OCI-LY7 (cell line): ENCODE measurements at regions of chr21 and their contacts with region 1.

Region 1: DNA sequence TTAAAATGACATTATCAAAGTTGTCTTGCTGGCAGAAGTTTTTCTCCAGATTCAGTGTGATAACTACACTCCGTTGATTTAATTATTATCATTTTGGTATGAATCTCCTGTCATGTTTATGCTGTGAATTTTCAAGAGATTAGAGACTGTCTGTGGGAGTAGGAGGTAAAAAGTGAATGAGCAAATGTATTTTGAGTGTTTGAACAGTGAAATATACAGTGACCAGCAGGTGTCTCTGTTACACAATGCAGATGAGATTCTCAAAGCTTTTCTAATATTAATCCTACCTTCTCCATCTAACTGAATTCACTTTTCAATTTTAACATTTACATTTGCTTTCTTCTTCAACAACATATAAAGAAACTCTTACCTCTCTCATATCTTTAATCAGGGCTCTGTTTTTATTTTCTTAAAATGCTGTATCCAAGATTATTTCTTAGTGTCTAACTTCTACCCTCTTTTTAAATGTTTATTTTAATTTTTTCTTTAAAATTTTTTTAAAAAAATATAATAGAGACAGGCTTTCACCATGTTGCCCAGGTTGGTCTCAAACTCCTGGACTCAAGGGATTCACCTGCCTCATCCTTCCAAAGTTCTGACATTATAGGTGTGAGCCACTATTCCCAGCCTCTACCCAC is 20.9 kb upstream of the HSPA13 start:
- DNase-seq: peak; percentile 45
- H3K4me3 ChIP-seq: no peak overlapping the region
- H3K27ac ChIP-seq: no peak overlapping the region
- H3K4me1 ChIP-seq: no peaks in the 10 kb centered on the region
- CTCF ChIP-seq: peak; percentile 87

Region 2: GRCh38 chr21:14438211-14438610 is 34.4 kb after region 1 on chr21:
- CTCF ChIA-PET with region 1: no interaction called
- POLR2A ChIA-PET with region 1: no interaction called
- intact Hi-C with region 1: no loop called
- DNase-seq: no peak
- H3K4me3 ChIP-seq: no peak overlapping the region
- H3K27ac ChIP-seq: no peak overlapping the region
- H3K4me1 ChIP-seq: no peaks in the 10 kb centered on the region
- CTCF ChIP-seq: no peak

Region 3: DNA sequence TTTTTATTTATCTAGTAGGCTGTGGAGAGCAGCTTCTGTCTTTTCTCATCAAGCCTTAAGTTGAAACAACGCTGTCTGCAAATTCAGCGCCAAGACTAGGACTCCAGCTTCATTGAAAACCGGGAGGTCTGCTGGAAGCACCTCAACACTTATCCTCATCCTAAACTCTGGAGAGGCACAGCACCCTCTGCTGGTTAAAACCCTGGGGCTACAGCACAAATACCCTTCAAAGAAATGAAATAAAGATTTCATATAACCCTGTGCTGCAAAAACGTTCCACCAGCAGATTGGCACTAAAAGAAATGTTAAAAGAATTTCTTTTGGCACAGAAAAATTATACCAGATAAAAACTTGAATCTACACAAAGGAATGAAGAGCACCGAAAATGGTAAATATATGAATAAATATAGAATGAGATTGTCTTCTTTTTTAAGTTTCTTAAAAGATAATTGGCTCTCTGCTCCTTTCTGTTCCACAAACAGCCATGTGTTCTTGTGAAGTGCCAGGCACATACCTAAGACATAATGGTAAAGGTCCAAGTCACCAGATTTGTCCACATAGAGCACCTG is 370.1 kb after region 1 on chr21:
- CTCF ChIA-PET with region 1: no interaction called
- POLR2A ChIA-PET with region 1: no interaction called
- intact Hi-C with region 1: loop called (anchors 2 kb)
- DNase-seq: peak; percentile 63
- H3K4me3 ChIP-seq: no peak overlapping the region
- H3K27ac ChIP-seq: no peak overlapping the region
- H3K4me1 ChIP-seq: peaks cover 3% of the 10 kb centered on the region
- CTCF ChIP-seq: peak; percentile 96

Region 4: DNA sequence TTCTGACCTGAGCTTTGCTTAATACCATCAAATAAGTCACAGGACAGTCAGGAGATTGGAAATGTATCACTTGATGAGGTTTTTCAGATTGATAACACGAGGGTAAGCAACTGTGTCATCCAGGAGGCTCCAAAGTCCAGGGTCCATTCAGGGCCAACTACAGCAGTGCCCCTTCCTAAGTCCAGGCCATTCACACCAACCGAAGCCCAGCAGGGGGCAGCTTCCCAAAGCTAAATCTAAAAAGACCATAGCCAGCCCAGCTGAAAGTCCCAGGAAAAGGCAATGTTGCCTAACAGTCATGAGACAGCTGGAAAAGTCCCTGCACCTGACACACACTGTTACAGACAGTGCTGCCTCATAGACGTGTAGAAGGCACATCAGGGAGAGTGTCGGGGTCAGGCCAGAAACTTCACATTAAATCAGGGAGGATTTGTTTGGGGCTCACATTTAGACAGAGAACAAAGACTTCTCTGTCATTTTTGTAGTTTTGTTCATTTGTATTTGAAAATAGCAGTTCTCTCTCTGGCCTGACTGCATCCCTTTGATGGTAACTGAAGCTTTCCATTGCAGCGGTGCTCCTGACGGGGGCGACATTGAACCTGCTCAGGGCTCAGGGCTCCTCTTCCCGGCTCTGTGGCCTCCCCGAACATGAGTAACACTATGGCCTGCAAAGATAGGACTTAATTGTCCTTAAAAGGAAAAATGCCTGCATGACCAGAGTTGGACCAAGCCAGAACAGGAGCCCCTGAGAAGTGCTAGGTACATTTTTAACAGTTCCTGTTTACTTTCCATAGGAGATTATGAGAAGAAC is 460.6 kb after region 1 on chr21:
- CTCF ChIA-PET with region 1: no interaction called
- POLR2A ChIA-PET with region 1: no interaction called
- intact Hi-C with region 1: loop called (anchors 10 kb)
- DNase-seq: peak; percentile 9
- H3K4me3 ChIP-seq: no peak overlapping the region
- H3K27ac ChIP-seq: no peak overlapping the region
- H3K4me1 ChIP-seq: no peaks in the 10 kb centered on the region
- CTCF ChIP-seq: peak; percentile 66